PC-3 (cell line): ENCODE measurements at regions of chr10 and their contacts with region 1.

Region 1: GRCh38 chr10:76763376-76763775 is 874.2 kb downstream of the KCNMA1 start:
- DNase-seq: no peak
- ATAC-seq: no peak; the same call in 1 of the 2 replicates
- H3K4me3 ChIP-seq: no peak overlapping the region
- H3K27ac ChIP-seq: no peak overlapping the region
- H3K4me1 ChIP-seq: no peaks in the 10 kb centered on the region
- H3K27me3 ChIP-seq: peaks cover 87% of the 10 kb centered on the region
- CTCF ChIP-seq: no peak

Region 2: DNA sequence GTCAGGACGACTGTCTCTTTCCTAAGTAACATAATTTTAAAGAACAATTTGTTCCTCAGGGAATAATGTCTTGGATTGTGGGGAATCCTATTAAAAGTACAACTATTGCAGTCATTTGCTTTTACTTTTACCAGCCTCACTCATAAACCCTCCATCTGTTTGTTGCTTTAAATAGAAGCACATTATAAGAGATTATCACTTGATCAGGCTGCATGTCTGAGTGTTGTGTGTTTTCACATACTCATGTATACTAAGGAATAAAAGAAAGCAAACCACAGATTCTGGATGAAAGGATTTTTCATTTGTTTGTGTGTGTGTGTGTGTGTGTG is 203.5 kb before region 1 on chr10:
- CTCF ChIA-PET with region 1: no interaction called
- POLR2A ChIA-PET with region 1: no interaction called
- intact Hi-C with region 1: loop called (anchors 10 kb)
- DNase-seq: no peak
- ATAC-seq: no peak
- H3K4me3 ChIP-seq: no peak overlapping the region
- H3K27ac ChIP-seq: no peak overlapping the region
- H3K4me1 ChIP-seq: peaks cover 14% of the 10 kb centered on the region
- H3K27me3 ChIP-seq: 0 out of 2 replicates have a peak, but pooled peaks cover 5% of the 10 kb centered on the region
- CTCF ChIP-seq: no peak

Region 3: GRCh38 chr10:76657337-76658012 is 105.9 kb before region 1 on chr10:
- CTCF ChIA-PET with region 1: no interaction called
- POLR2A ChIA-PET with region 1: no interaction called
- intact Hi-C with region 1: no loop called
- DNase-seq: no peak
- ATAC-seq: no peak
- H3K4me3 ChIP-seq: no peak overlapping the region
- H3K27ac ChIP-seq: no peak overlapping the region
- H3K4me1 ChIP-seq: no peaks in the 10 kb centered on the region
- H3K27me3 ChIP-seq: peaks cover 40% of the 10 kb centered on the region
- CTCF ChIP-seq: no peak

Region 4: GRCh38 chr10:76697923-76698322 is 65.5 kb before region 1 on chr10:
- CTCF ChIA-PET with region 1: no interaction called
- POLR2A ChIA-PET with region 1: no interaction called
- intact Hi-C with region 1: no loop called
- DNase-seq: peak; percentile 41
- ATAC-seq: peak; percentile 60
- H3K4me3 ChIP-seq: no peak overlapping the region
- H3K27ac ChIP-seq: no peak overlapping the region
- H3K4me1 ChIP-seq: no peaks in the 10 kb centered on the region
- H3K27me3 ChIP-seq: 0 out of 2 replicates have a peak, but pooled peaks cover 5% of the 10 kb centered on the region
- CTCF ChIP-seq: peak; percentile 67

Region 5: DNA sequence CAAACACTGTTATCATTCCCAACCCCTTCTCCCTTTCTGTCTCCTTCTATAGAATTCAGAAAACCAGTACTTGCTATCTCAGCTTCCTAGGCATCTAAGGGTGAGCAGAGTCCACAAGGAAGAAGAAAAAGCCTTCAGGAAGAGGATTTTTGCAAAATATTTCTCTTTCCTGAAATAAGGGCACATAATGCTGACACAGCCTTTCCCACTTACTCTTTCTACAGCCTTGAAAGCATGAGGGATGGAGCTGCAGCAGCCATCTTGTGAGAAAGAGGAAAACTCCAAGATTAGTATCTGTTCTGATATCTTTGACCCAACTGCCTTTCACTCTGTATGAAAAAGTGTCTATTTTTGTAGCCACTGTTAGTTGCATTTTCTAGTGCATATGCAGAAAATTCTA is 48.1 kb after region 1 on chr10:
- CTCF ChIA-PET with region 1: no interaction called
- POLR2A ChIA-PET with region 1: no interaction called
- intact Hi-C with region 1: loop called (anchors 10 kb)
- DNase-seq: no peak
- ATAC-seq: no peak
- H3K4me3 ChIP-seq: no peak overlapping the region
- H3K27ac ChIP-seq: no peak overlapping the region
- H3K4me1 ChIP-seq: no peaks in the 10 kb centered on the region
- H3K27me3 ChIP-seq: peaks cover 71% of the 10 kb centered on the region
- CTCF ChIP-seq: no peak

Region 6: GRCh38 chr10:76939933-76940468 is 176.6 kb after region 1 on chr10:
- CTCF ChIA-PET with region 1: no interaction called
- POLR2A ChIA-PET with region 1: no interaction called
- intact Hi-C with region 1: no loop called
- DNase-seq: no peak
- ATAC-seq: peak; percentile 56
- H3K4me3 ChIP-seq: no peak overlapping the region
- H3K27ac ChIP-seq: no peak overlapping the region
- H3K4me1 ChIP-seq: no peaks in the 10 kb centered on the region
- H3K27me3 ChIP-seq: 0 out of 2 replicates have a peak, but pooled peaks cover 2% of the 10 kb centered on the region
- CTCF ChIP-seq: no peak